ENCODE measurements at regions of chr3 and their contacts with region 1.

Region 1: GRCh38 chr3:159978353-159978752 is 10.3 kb upstream of the IL12A start:
- H3K4me3 ChIP-seq: no peak overlapping the region
- H3K27ac ChIP-seq: no peak overlapping the region
- H3K4me1 ChIP-seq: no peaks in the 10 kb centered on the region
- CTCF ChIP-seq: no peak

Region 2: GRCh38 chr3:159988617-159989271 is 10.4 kb after region 1 on chr3 and contains the start of gene IL12A:
- CTCF ChIA-PET with region 1: interaction called, 12 read pairs
- POLR2A ChIA-PET with region 1: no interaction called
- H3K4me3 ChIP-seq: peak within 1 kb of the TSS; percentile 55
- H3K27ac ChIP-seq: peak within 1 kb of the TSS; percentile 13; the same call in 1 of the 2 replicates
- H3K4me1 ChIP-seq: no peaks in the 10 kb centered on the region
- CTCF ChIP-seq: peak; percentile 83

Measured in HEK293 (cell line).